BJ (cell line): ENCODE measurements at regions of chr1 and their contacts with region 1.

Region 1: DNA sequence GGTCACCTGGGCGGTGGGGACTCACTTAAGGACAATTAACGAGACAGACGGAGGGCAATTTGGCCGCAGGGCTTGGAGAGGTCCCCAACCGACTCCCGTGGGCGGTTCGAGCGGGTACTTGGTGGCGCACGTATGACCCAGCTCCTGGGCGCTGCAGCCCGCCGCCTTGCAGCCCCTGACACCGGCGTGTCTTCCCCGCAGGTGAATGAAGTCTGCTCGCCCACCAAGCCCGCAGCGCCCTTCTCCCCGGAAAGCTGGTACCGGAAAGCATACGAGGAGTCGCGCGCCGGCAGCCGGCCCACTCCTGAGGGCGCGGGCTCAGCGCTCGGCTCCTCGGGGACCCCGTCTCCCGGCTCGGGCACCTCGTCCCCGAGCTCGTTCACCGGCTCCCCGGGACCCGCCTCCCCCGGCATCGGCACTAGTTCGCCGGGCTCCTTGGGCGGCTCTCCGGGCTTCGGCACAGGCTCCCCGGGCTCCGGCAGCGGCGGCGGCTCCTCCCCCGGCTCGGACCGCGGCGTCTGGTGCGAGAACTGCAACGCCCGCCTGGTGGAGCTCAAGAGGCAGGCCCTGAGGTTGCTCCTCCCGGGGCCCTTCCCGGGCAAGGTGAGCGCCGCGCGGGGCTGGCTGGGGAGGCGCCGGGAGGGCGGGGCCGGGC is 1.4 kb downstream of the KIF26B start:
- DNase-seq: no peak
- H3K4me3 ChIP-seq: peak overlapping the region; percentile 82
- H3K27me3 ChIP-seq: no peaks in the 10 kb centered on the region
- CTCF ChIP-seq: peak; percentile 65

Region 2: GRCh38 chr1:245079021-245079609 is 77.1 kb before region 1 on chr1:
- CTCF ChIA-PET with region 1: interaction called, 13 read pairs
- POLR2A ChIA-PET with region 1: no interaction called
- DNase-seq: no peak
- H3K4me3 ChIP-seq: no peak overlapping the region
- H3K27me3 ChIP-seq: peaks cover 2% of the 10 kb centered on the region; the same call in 1 of the 2 replicates
- CTCF ChIP-seq: peak; percentile 85

Region 3: GRCh38 chr1:245195401-245195800 is 39.2 kb after region 1 on chr1:
- CTCF ChIA-PET with region 1: interaction called, 12 read pairs
- POLR2A ChIA-PET with region 1: no interaction called
- DNase-seq: no peak
- H3K4me3 ChIP-seq: no peak overlapping the region
- H3K27me3 ChIP-seq: no peaks in the 10 kb centered on the region
- CTCF ChIP-seq: no peak

Region 4: GRCh38 chr1:246002725-246003441 is 846.7 kb after region 1 on chr1:
- CTCF ChIA-PET with region 1: interaction called, 19 read pairs
- POLR2A ChIA-PET with region 1: no interaction called
- DNase-seq: peak; percentile 34
- H3K4me3 ChIP-seq: no peak overlapping the region
- H3K27me3 ChIP-seq: no peaks in the 10 kb centered on the region
- CTCF ChIP-seq: peak; percentile 87

Region 5: GRCh38 chr1:246497331-246497915 is 1341.2 kb after region 1 on chr1:
- CTCF ChIA-PET with region 1: interaction called, 58 read pairs
- POLR2A ChIA-PET with region 1: no interaction called
- DNase-seq: no peak
- H3K4me3 ChIP-seq: no peak overlapping the region
- H3K27me3 ChIP-seq: no peaks in the 10 kb centered on the region
- CTCF ChIP-seq: peak; percentile 69